Ascending aorta (tissue), 2 donors: ENCODE measurements at regions of chr17 and their contacts with region 1.

Region 1: GRCh38 chr17:4498461-4499397 is at the start of gene SPNS2:
- DNase-seq: peak in 1 of 2 donors; percentile 82
- H3K4me3 ChIP-seq: peak within 1 kb of the TSS; percentile 63
- H3K27ac ChIP-seq: peak within 1 kb of the TSS; percentile 92
- H3K4me1 ChIP-seq: peaks cover 13 to 27% of the 10 kb centered on the region in 2 donors
- H3K27me3 ChIP-seq: no peaks in the 10 kb centered on the region
- CTCF ChIP-seq: no peak
- total RNA-seq, gene SPNS2: 107 TPM

Region 2: GRCh38 chr17:4199818-4200402 is 298.8 kb before region 1 on chr17:
- intact Hi-C with region 1: loop called (anchors 5 kb)
- DNase-seq: peak in 1 of 2 donors; percentile 59
- H3K4me3 ChIP-seq: no peak overlapping the region
- H3K27ac ChIP-seq: no peak overlapping the region
- H3K4me1 ChIP-seq: peaks cover 0 to 11% of the 10 kb centered on the region in 2 donors
- H3K27me3 ChIP-seq: no peaks in the 10 kb centered on the region
- CTCF ChIP-seq: peak; percentile 43 to 74 (median 70)

Region 3: GRCh38 chr17:4366327-4367063 is 132.2 kb before region 1 on chr17 and contains the start of gene UBE2G1:
- intact Hi-C with region 1: loop called (anchors 5 kb)
- DNase-seq: peak; percentile 87 to 99
- H3K4me3 ChIP-seq: peak within 1 kb of the TSS; percentile 86 to 93
- H3K27ac ChIP-seq: peak within 1 kb of the TSS; percentile 93 to 98
- H3K4me1 ChIP-seq: peaks cover 6 to 18% of the 10 kb centered on the region in 2 donors
- H3K27me3 ChIP-seq: no peaks in the 10 kb centered on the region
- CTCF ChIP-seq: peak; percentile 8 to 36 (median 21)
- total RNA-seq, gene UBE2G1: 27.9 TPM

Region 4: DNA sequence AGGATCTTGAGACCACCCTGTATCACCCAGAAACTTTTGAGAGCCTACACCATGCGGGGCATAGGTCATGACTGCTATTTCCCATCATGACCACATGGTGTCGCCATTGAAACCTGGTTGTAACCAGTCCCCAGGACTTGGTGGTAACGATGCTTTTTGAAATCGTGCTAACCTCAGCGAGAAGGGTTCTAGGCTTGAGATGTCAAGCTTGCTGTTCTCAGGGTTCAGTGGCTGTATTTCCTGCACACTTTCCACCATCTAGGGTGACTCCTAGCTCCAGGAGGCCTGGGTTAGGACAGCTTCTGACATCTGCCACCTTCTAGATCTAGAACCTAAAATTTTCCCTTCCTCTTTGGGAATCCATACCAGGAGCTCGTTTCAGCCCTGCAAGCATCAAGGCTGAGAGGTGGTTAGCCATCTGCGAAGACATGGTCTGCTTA is 78.0 kb before region 1 on chr17:
- intact Hi-C with region 1: loop called (anchors 5 kb)
- DNase-seq: peak in 1 of 2 donors; percentile 77
- H3K4me3 ChIP-seq: no peak overlapping the region
- H3K27ac ChIP-seq: no peak overlapping the region
- H3K4me1 ChIP-seq: peaks cover 0 to 2% of the 10 kb centered on the region in 2 donors
- H3K27me3 ChIP-seq: no peaks in the 10 kb centered on the region
- CTCF ChIP-seq: peak; percentile 72 to 88 (median 80)

Region 5: GRCh38 chr17:4509401-4509800 is 10.7 kb after region 1 on chr17:
- intact Hi-C with region 1: loop called (anchors 1 kb)
- DNase-seq: peak; percentile 41 to 89
- H3K4me3 ChIP-seq: no peak overlapping the region
- H3K27ac ChIP-seq: peak overlapping the region; percentile 84 to 87
- H3K4me1 ChIP-seq: peaks cover 25 to 36% of the 10 kb centered on the region in 2 donors
- H3K27me3 ChIP-seq: no peaks in the 10 kb centered on the region
- CTCF ChIP-seq: peak in 1 of 3 experiments; percentile 6

Region 6: DNA sequence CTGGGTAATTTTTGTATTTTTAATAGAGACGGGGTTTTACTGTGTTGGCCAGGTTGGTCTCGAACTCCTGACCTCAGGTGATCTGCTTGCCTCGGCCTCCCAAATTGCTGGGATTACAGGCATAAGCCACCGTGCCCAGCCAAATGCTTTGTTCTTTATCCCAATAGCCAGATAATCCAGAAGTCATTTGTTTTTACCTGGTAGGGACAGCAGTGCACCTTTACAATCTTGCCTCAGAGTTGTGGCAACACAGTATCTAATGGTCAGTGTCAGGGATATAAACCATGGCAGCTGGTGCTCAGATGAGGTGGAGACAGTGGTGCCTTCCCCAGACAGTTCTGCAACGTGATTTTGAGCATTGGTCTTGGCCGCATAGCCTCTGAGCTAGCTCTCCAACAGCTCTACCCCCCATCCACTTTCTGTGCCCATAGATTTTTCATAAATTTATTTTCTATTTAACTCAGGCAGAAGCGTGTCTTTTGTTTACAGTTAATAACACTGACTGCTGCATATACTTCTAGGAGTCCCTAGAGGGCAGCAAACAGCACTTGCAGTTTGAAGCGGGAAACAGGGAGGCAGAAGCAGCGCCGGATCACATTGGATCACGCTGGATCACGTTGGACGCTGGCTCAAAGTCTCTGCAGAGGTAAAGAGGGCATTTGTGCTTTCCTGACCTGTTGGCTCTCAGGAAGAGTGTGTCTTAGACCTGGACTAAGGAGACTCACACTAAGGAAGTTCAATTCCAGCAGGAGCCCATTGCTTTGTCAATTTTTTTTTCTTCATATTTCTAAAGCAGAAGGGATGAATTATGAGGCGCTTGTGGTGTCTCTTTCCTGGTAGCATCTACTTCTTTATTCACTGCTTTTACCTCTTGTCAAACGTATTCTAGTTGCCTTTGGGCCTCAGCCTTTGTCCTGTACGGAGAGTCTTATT is 66.7 kb after region 1 on chr17:
- intact Hi-C with region 1: loop called (anchors 2 kb)
- DNase-seq: peak in 1 of 2 donors; percentile 81
- H3K4me3 ChIP-seq: no peak overlapping the region
- H3K27ac ChIP-seq: no peak overlapping the region
- H3K4me1 ChIP-seq: peaks cover 6 to 10% of the 10 kb centered on the region in 2 donors
- H3K27me3 ChIP-seq: no peaks in the 10 kb centered on the region
- CTCF ChIP-seq: peak; percentile 50 to 83 (median 83)